B cell (primary cell): ENCODE measurements at regions of chr12 and their contacts with region 1.

Region 1: GRCh38 chr12:110280779-110281548 is at the start of gene ATP2A2:
- DNase-seq: peak; percentile 96
- ATAC-seq: peak; percentile 86
- H3K4me3 ChIP-seq: peak within 1 kb of the TSS; percentile 75 to 91 (median 88)
- H3K4me3 Mint-ChIP-seq: peak within 1 kb of the TSS; percentile 98
- H3K27ac ChIP-seq: peak within 1 kb of the TSS; percentile 63 to 84
- H3K27ac Mint-ChIP-seq: peak within 1 kb of the TSS; percentile 97
- H3K4me1 ChIP-seq: peaks cover 26 to 38% of the 10 kb centered on the region in 2 donors
- H3K4me1 Mint-ChIP-seq: peaks cover 45% of the 10 kb centered on the region
- H3K27me3 ChIP-seq: no peaks in the 10 kb centered on the region
- H3K27me3 Mint-ChIP-seq: no peaks in the 10 kb centered on the region
- CTCF ChIP-seq: peak; percentile 10
- total RNA-seq, gene ATP2A2: 68.2 and 73.1 TPM in 2 replicates

Region 2: GRCh38 chr12:109995686-109996482 is 285.1 kb before region 1 on chr12 and contains the start of gene GIT2:
- CTCF ChIA-PET with region 1: interaction called, 4 read pairs
- POLR2A ChIA-PET with region 1: no interaction called
- intact Hi-C with region 1: loop called (anchors 2 kb)
- DNase-seq: peak; percentile 95
- ATAC-seq: peak; percentile 69
- H3K4me3 ChIP-seq: peak within 1 kb of the TSS; percentile 68 to 99 (median 74)
- H3K4me3 Mint-ChIP-seq: peak within 1 kb of the TSS; percentile 90
- H3K27ac ChIP-seq: peak within 1 kb of the TSS; percentile 69 to 90
- H3K27ac Mint-ChIP-seq: peak within 1 kb of the TSS; percentile 91
- H3K4me1 ChIP-seq: peaks cover 39 to 47% of the 10 kb centered on the region in 2 donors
- H3K4me1 Mint-ChIP-seq: peaks cover 67% of the 10 kb centered on the region
- H3K27me3 ChIP-seq: no peaks in the 10 kb centered on the region
- H3K27me3 Mint-ChIP-seq: no peaks in the 10 kb centered on the region
- CTCF ChIP-seq: no peak
- total RNA-seq, gene GIT2: 163 and 177 TPM in 2 replicates

Region 3: GRCh38 chr12:110100315-110100970 is 180.5 kb before region 1 on chr12:
- CTCF ChIA-PET with region 1: interaction called, 4 read pairs
- POLR2A ChIA-PET with region 1: no interaction called
- intact Hi-C with region 1: loop called (anchors 1 kb)
- DNase-seq: peak; percentile 91
- ATAC-seq: peak; percentile 98
- H3K4me3 ChIP-seq: peak overlapping the region in 2 of 5 experiments; percentile 15 to 21
- H3K4me3 Mint-ChIP-seq: peak overlapping the region; percentile 67
- H3K27ac ChIP-seq: peak overlapping the region; percentile 72 to 73
- H3K27ac Mint-ChIP-seq: peak overlapping the region; percentile 81
- H3K4me1 ChIP-seq: peaks cover 21 to 22% of the 10 kb centered on the region in 2 donors
- H3K4me1 Mint-ChIP-seq: peaks cover 24% of the 10 kb centered on the region
- H3K27me3 ChIP-seq: no peaks in the 10 kb centered on the region
- H3K27me3 Mint-ChIP-seq: no peaks in the 10 kb centered on the region
- CTCF ChIP-seq: peak; percentile 93

Region 4: DNA sequence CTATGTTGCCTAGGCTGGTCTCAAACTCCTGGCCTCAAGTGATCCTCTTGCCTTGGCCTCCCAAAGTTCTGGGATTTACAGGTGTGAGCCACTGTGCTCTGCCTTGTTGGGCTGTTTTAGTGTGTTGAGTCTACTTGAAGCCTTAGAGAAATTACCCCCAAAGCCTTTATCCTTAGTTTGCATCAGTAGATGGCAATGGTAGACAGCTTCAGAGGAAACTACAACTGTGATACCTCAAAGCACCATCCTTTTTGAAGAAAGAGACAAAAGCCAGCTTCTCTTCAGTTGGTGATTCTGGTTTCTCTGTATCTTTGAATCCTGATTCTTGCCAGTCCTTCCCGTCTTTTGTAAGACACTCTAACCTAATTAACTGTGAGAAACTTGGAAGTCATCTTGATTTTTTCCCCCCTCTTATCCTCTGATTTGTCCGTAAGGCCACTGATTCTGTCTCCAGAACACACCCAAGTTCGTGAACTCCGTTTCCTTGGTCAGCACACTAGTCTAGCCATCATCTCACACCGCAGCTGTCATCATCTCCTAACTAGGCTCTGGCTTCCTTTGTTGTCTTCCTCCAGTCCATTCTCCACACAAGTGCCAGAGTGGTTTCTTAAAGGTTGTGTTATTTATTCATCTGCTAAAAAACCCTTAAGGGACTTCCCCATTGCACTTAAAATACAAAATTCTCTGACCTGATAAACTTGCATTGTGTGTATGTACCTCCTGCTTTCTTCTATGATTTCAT is 20.3 kb after region 1 on chr12:
- CTCF ChIA-PET with region 1: no interaction called
- POLR2A ChIA-PET with region 1: no interaction called
- intact Hi-C with region 1: no loop called
- DNase-seq: no peak
- ATAC-seq: no peak
- H3K4me3 ChIP-seq: no peak overlapping the region
- H3K4me3 Mint-ChIP-seq: no peak overlapping the region
- H3K27ac ChIP-seq: peak overlapping the region in 1 of 2 donors; percentile 26
- H3K27ac Mint-ChIP-seq: no peak overlapping the region
- H3K4me1 ChIP-seq: peaks cover 0 to 4% of the 10 kb centered on the region in 2 donors
- H3K4me1 Mint-ChIP-seq: peaks cover 13% of the 10 kb centered on the region
- H3K27me3 ChIP-seq: no peaks in the 10 kb centered on the region
- H3K27me3 Mint-ChIP-seq: no peaks in the 10 kb centered on the region
- CTCF ChIP-seq: no peak

Region 5: GRCh38 chr12:110403146-110403975 is 122.4 kb after region 1 on chr12 and contains the start of gene ANAPC7:
- CTCF ChIA-PET with region 1: no interaction called
- POLR2A ChIA-PET with region 1: no interaction called
- intact Hi-C with region 1: loop called (anchors 1 kb)
- DNase-seq: peak; percentile 92
- ATAC-seq: peak; percentile 93
- H3K4me3 ChIP-seq: peak within 1 kb of the TSS; percentile 85 to 100 (median 98)
- H3K4me3 Mint-ChIP-seq: peak within 1 kb of the TSS; percentile 99
- H3K27ac ChIP-seq: peak within 1 kb of the TSS; percentile 83 to 89
- H3K27ac Mint-ChIP-seq: peak within 1 kb of the TSS; percentile 99
- H3K4me1 ChIP-seq: peaks cover 13 to 18% of the 10 kb centered on the region in 2 donors
- H3K4me1 Mint-ChIP-seq: peaks cover 34% of the 10 kb centered on the region
- H3K27me3 ChIP-seq: no peaks in the 10 kb centered on the region
- H3K27me3 Mint-ChIP-seq: peaks cover 1% of the 10 kb centered on the region
- CTCF ChIP-seq: no peak
- total RNA-seq, gene ANAPC7: 68.4 and 68.8 TPM in 2 replicates

Region 6: DNA sequence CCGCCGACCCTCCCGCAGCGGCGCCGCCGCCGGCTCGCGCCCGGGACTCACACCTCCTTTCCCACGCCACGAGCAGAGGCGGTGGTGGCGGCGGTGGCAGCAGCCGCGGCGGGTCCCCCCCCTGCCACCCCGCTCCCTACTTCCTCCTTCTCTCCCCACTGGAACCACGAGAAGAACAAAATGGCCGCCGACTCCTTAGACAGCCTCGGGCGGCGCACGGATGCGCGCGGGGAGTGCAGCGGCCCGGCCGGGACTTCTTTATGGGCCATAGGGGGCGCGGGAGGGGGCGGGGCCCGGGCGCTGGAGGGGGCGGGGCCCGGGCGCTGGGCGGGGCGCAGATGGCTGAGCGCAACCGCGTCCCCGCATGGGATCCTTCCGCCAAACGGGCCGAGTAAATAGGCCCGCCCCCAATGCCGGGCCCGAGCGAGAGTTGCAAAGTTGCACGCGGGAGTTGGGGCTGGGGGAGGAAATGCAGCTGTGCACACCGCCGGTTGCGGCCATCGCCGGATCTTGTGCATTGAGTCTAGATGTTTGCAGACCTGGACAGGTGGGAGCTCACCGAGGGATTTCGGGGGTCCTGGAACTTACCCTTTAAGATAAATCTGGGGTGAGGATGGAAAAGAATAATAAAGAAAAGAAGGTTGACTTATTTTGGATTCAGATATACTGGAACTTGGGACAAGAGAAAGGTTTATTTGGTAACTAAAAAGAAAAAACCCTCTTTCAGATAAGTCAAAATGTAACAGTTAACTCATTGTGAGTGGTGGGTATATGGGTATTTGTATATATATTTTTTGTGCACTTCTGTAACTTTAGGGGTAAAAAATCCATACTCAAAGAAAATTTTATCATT is 462.0 kb after region 1 on chr12 and contains the start of gene PPP1CC:
- CTCF ChIA-PET with region 1: no interaction called
- POLR2A ChIA-PET with region 1: no interaction called
- intact Hi-C with region 1: loop called (anchors 10 kb)
- DNase-seq: peak; percentile 97
- ATAC-seq: peak; percentile 95
- H3K4me3 ChIP-seq: peak within 1 kb of the TSS; percentile 86 to 94 (median 92)
- H3K4me3 Mint-ChIP-seq: peak within 1 kb of the TSS; percentile 99
- H3K27ac ChIP-seq: peak within 1 kb of the TSS; percentile 31 to 78
- H3K27ac Mint-ChIP-seq: peak within 1 kb of the TSS; percentile 95
- H3K4me1 ChIP-seq: peaks cover 32 to 36% of the 10 kb centered on the region in 2 donors
- H3K4me1 Mint-ChIP-seq: peaks cover 40% of the 10 kb centered on the region
- H3K27me3 ChIP-seq: no peaks in the 10 kb centered on the region
- H3K27me3 Mint-ChIP-seq: no peaks in the 10 kb centered on the region
- CTCF ChIP-seq: no peak
- total RNA-seq, gene PPP1CC: 146 and 150 TPM in 2 replicates